Ovary (tissue), 10 donors: ENCODE measurements at regions of chr6 and their contacts with region 1.

Region 1: GRCh38 chr6:132483779-132484679 is 28.9 kb downstream of the STX7 start:
- DNase-seq: peak in 3 of 5 donors; percentile 10 to 43 (median 26)
- H3K4me3 ChIP-seq: no peak overlapping the region
- H3K27ac ChIP-seq: no peak overlapping the region
- H3K4me1 ChIP-seq: no peaks in the 10 kb centered on the region
- H3K27me3 ChIP-seq: no peaks in the 10 kb centered on the region
- CTCF ChIP-seq: peak; percentile 47 to 81 (median 62)
- EP300 ChIP-seq: no peak
- POLR2A ChIP-seq: no peak

Region 2: DNA sequence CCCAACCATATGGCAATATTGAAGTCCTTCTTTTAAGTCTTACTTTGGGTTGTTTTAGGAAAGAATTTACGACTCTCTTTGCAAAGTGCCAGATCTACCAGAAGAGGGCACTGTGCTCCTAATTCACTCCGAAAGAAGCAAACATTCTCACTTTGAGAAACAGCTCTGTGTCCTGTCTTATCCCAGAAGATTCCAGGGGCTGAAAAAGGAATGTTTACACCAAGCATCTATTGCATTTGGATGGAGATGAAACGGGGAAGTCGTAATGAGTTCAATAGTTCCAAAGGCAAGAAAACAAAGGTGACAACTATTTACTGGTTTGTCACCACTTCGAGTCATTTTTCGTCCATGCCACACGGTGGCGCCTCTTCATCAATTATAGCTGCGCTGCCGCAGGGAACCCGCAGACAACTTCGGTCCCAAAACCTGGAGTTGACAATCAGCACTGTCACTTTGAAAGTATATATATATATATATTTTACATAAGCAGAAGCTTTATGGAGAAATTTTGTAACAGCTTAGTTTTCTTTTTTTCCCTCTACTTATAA is 204.4 kb before region 1 on chr6:
- intact Hi-C with region 1: loop called in 3 of 4 experiments (anchors 5 to 10 kb)
- DNase-seq: peak; percentile 43 to 73 (median 60)
- H3K4me3 ChIP-seq: peak overlapping the region; percentile 15
- H3K27ac ChIP-seq: no peak overlapping the region
- H3K4me1 ChIP-seq: no peaks in the 10 kb centered on the region
- H3K27me3 ChIP-seq: no peaks in the 10 kb centered on the region
- CTCF ChIP-seq: peak; percentile 21 to 89 (median 86)
- EP300 ChIP-seq: no peak
- POLR2A ChIP-seq: no peak

Region 3: DNA sequence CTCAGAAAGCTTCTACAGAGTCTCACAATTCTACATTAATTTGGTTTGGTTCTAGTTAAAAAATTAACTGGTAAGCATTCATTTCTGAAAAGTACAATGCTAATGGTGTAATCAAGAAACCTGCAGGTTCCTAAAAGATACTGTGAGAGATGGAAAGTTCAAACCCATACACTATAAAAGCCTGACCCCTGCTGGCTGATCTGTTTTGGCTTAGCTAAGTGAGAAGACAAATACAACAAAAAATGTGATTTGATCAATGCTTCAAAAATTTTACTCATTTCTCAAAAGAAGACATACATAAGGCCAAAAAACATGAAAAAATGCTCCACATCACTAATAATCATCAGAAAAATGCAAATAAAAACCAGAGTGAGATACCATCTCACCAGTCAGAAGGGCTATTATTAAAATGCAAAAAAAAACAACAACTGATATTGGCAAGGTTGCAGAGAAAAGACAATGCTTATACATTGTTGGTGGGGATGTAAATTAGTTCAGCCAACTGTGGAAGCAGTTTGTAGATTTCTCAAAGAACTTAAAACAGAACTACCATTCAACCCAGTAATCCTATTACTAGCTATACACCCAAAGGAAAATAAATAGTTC is 185.6 kb before region 1 on chr6:
- intact Hi-C with region 1: loop called in 1 of 4 experiments (anchors 10 kb)
- DNase-seq: no peak
- H3K4me3 ChIP-seq: no peak overlapping the region
- H3K27ac ChIP-seq: no peak overlapping the region
- H3K4me1 ChIP-seq: no peaks in the 10 kb centered on the region
- H3K27me3 ChIP-seq: no peaks in the 10 kb centered on the region
- CTCF ChIP-seq: no peak
- EP300 ChIP-seq: no peak
- POLR2A ChIP-seq: no peak

Region 4: DNA sequence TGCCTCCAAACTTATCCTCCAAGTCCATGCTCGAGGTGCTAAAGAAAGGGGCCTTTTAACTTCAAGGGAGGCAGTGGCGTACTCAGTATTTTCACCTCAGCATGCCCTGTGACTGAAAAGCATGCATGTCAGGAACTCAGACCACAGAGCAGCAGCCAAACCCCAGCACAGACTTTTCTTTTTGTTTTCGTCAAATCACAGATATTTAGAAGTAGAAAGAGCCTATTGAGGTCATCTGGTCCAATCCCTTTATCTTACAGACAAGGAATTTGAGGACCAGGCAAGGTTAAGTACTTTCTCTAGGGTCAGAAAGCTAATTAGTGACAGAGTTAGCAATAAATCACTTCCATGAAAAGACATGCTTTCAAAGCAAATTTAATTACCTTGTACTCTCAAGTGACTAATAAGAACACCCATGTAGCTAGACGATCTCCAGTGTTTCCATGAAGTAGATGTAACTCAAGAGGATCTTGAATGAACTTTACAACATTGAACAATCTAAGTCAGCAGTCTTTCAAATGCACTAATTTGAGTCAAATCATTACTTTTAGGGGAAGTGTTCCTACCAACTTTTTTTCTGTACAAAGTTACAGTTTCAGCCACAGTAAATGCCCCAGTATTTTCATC is 118.6 kb before region 1 on chr6:
- intact Hi-C with region 1: no loop called
- DNase-seq: no peak
- H3K4me3 ChIP-seq: no peak overlapping the region
- H3K27ac ChIP-seq: no peak overlapping the region
- H3K4me1 ChIP-seq: peaks cover 2% of the 10 kb centered on the region
- H3K27me3 ChIP-seq: no peaks in the 10 kb centered on the region
- CTCF ChIP-seq: no peak
- EP300 ChIP-seq: no peak
- POLR2A ChIP-seq: no peak